ENCODE measurements at regions of chr5 and their contacts with region 1.

Region 1: GRCh38 chr5:116137544-116138378 is 52.9 kb downstream of the COMMD10 start:
- DNase-seq: no peak
- ATAC-seq: no peak

Region 2: DNA sequence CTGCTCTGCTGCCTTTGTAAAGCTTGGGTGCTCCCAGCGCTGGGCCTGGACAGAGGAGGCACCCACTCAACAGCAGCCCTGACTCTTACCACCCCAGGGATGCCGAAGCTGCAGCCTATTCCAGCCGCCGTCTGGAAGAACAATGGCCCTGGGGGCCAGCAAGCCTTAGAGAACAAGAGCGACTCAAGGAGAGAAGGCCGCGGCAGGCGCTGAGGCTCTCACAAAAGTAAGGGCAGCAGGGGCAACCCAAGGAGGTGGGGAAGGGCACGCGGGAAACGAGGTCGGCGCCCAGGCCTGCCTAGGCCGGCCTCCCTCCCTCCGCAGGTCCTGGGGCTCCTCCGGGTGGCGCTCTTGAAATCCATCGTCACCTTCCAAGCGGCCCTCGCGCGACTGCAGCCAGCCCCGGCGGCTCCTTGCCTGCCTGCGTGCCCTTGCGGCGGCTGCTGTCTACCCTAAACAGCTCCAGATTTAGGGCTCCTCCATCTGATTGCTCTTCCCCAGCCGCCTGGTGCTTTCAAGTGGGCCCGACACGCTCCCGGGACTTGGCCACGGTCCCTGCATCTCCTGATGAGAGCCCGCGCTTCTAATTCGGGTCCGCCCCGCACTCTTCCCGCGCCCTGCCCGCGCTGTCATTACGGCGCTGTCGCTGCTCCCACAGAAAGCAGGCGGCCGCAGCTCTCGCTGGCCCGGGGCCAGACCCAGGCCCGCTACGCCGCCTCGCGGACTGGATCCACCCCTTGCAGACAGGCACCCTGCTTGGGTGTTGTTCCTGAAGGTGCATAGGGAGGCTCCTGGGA is 223.6 kb after region 1 on chr5:
- intact Hi-C with region 1: loop called (anchors 5 kb)
- DNase-seq: peak; percentile 77
- ATAC-seq: peak; percentile 67

Measured in Right ventricle myocardium inferior (tissue), 1 donor.